SK-N-SH (cell line): ENCODE measurements at regions of chr11 and their contacts with region 1.

Region 1: DNA sequence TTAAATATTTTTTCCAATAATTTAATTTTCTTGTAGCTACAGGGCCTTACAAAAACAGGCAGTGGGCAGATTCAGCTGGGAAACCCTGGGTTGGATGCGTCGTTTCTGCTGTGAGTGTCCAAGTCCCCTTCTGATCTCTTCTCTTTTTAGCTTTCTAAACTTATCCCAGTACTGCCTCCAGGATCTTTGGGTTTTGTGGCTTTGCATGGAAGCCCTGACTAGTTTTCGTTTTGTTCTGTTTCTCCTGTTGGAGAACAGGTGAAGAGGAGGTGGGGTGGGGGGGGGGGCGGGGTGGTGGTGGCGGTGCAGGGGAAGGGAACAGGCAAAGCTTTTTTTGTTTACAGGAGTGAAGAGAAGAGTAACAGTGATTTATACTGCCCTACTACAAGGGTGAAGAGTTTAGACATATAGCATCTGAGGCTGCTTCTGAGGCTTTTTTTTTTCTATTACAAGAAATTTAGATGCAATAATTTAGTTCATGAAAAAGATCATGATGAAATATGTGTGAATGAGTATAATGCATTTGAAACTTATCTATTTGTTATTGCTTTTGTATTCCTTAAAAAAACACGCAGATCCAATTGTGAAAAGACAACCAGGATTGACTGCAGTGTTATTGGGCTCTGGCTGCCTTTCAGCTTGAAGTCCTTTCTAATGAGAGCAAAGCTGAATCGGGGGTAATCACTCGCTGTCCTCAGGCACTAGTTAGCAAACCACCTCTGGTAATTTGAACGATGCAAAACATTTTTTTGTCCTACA is 142.9 kb downstream of the NCAM1 start:
- DNase-seq: no peak
- H3K4me3 ChIP-seq: no peak overlapping the region
- H3K27ac ChIP-seq: peak overlapping the region in 1 of 2 experiments; percentile 53; a peak in 1 of 4 replicates
- H3K4me1 ChIP-seq: peaks cover 14 to 17% of the 10 kb centered on the region in 2 experiments; a peak in 2 of 4 replicates
- H3K27me3 ChIP-seq: no peaks in the 10 kb centered on the region
- CTCF ChIP-seq: no peak
- EP300 ChIP-seq: no peak
- RAD21 ChIP-seq: no peak

Region 2: GRCh38 chr11:113091481-113091780 is 12.7 kb before region 1 on chr11:
- CTCF ChIA-PET with region 1: interaction called, 11 read pairs
- POLR2A ChIA-PET with region 1: no interaction called
- DNase-seq: no peak
- H3K4me3 ChIP-seq: no peak overlapping the region
- H3K27ac ChIP-seq: peak overlapping the region in 1 of 2 experiments; percentile 76; a peak in 2 of 4 replicates
- H3K4me1 ChIP-seq: peaks cover 0 to 7% of the 10 kb centered on the region in 2 experiments; a peak in 2 of 4 replicates
- H3K27me3 ChIP-seq: no peaks in the 10 kb centered on the region
- CTCF ChIP-seq: no peak
- EP300 ChIP-seq: peak in 1 of 2 experiments; percentile 2; a peak in 1 of 4 replicates
- RAD21 ChIP-seq: no peak